Activated B cell treated with CpG ODN at 0.5 μM for 24 hours (primary cell): ENCODE measurements at regions of chr1 and their contacts with region 1.

Region 1: GRCh38 chr1:110384581-110385321 is 6.1 kb downstream of the SLC16A4 start:
- DNase-seq: peak; percentile 59
- ATAC-seq: peak; percentile 77
- H3K4me3 Mint-ChIP-seq: peak overlapping the region; percentile 55
- H3K27ac Mint-ChIP-seq: peak overlapping the region; percentile 95
- H3K4me1 Mint-ChIP-seq: peaks cover 95% of the 10 kb centered on the region
- H3K27me3 Mint-ChIP-seq: no peaks in the 10 kb centered on the region
- CTCF ChIP-seq: no peak

Region 2: GRCh38 chr1:108512239-108512981 is 1872.3 kb before region 1 on chr1:
- CTCF ChIA-PET with region 1: no interaction called
- POLR2A ChIA-PET with region 1: no interaction called
- intact Hi-C with region 1: no loop called
- DNase-seq: no peak
- ATAC-seq: peak; percentile 85
- H3K4me3 Mint-ChIP-seq: no peak overlapping the region
- H3K27ac Mint-ChIP-seq: no peak overlapping the region
- H3K4me1 Mint-ChIP-seq: no peaks in the 10 kb centered on the region
- H3K27me3 Mint-ChIP-seq: no peaks in the 10 kb centered on the region
- CTCF ChIP-seq: peak; percentile 95

Region 3: GRCh38 chr1:109090196-109091077 is 1294.3 kb before region 1 on chr1 and contains the start of gene TMEM167B:
- CTCF ChIA-PET with region 1: no interaction called
- POLR2A ChIA-PET with region 1: no interaction called
- intact Hi-C with region 1: loop called (anchors 5 kb)
- DNase-seq: peak; percentile 79
- ATAC-seq: peak; percentile 87
- H3K4me3 Mint-ChIP-seq: peak within 1 kb of the TSS; percentile 98
- H3K27ac Mint-ChIP-seq: peak within 1 kb of the TSS; percentile 97
- H3K4me1 Mint-ChIP-seq: peaks cover 35% of the 10 kb centered on the region
- H3K27me3 Mint-ChIP-seq: no peaks in the 10 kb centered on the region
- CTCF ChIP-seq: no peak
- total RNA-seq, gene TMEM167B: 45.0 and 48.2 TPM in 2 replicates

Region 4: GRCh38 chr1:109931189-109931731 is 453.5 kb before region 1 on chr1:
- CTCF ChIA-PET with region 1: no interaction called
- POLR2A ChIA-PET with region 1: no interaction called
- intact Hi-C with region 1: no loop called
- DNase-seq: no peak
- ATAC-seq: no peak
- H3K4me3 Mint-ChIP-seq: no peak overlapping the region
- H3K27ac Mint-ChIP-seq: no peak overlapping the region
- H3K4me1 Mint-ChIP-seq: no peaks in the 10 kb centered on the region
- H3K27me3 Mint-ChIP-seq: peaks cover 8% of the 10 kb centered on the region
- CTCF ChIP-seq: no peak

Region 5: DNA sequence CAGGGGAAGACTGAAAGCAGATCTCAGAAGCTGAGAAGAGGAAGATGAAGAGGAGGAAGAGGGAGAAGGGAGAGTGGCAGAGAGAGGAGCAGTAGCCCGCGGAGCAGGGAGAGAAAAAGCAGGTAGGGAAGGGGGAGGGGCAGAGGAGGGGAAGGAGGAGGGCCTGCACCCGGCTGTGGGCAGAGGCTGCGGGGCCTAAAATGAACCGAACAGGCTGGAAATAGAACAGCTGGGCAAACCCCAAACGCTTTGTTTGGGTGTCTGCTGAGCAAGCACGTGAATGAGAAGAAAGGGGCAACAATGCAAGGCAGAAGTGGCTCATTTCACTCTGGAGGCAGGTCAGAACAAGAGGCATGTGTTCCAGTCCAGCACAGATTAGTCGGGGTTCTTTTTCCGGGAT is 141.2 kb before region 1 on chr1:
- CTCF ChIA-PET with region 1: no interaction called
- POLR2A ChIA-PET with region 1: no interaction called
- intact Hi-C with region 1: loop called (anchors 1 kb)
- DNase-seq: peak; percentile 30
- ATAC-seq: peak; percentile 89
- H3K4me3 Mint-ChIP-seq: peak overlapping the region; percentile 71
- H3K27ac Mint-ChIP-seq: peak overlapping the region; percentile 73
- H3K4me1 Mint-ChIP-seq: peaks cover 37% of the 10 kb centered on the region
- H3K27me3 Mint-ChIP-seq: no peaks in the 10 kb centered on the region
- CTCF ChIP-seq: no peak

Region 6: GRCh38 chr1:110407260-110408210 is 22.8 kb after region 1 on chr1 and contains the start of gene LAMTOR5:
- CTCF ChIA-PET with region 1: interaction called, 12 read pairs
- POLR2A ChIA-PET with region 1: interaction called, 47 read pairs
- intact Hi-C with region 1: loop called (anchors 1 kb)
- DNase-seq: peak; percentile 84
- ATAC-seq: peak; percentile 91
- H3K4me3 Mint-ChIP-seq: peak within 1 kb of the TSS; percentile 97
- H3K27ac Mint-ChIP-seq: peak within 1 kb of the TSS; percentile 96
- H3K4me1 Mint-ChIP-seq: peaks cover 26% of the 10 kb centered on the region
- H3K27me3 Mint-ChIP-seq: no peaks in the 10 kb centered on the region
- CTCF ChIP-seq: no peak
- total RNA-seq, gene LAMTOR5: 160 and 172 TPM in 2 replicates

Region 7: GRCh38 chr1:110412576-110412975 is 27.8 kb after region 1 on chr1:
- CTCF ChIA-PET with region 1: interaction called, 12 read pairs
- POLR2A ChIA-PET with region 1: interaction called, 47 read pairs
- intact Hi-C with region 1: loop called (anchors 1 kb)
- DNase-seq: peak; percentile 56
- ATAC-seq: peak; percentile 66
- H3K4me3 Mint-ChIP-seq: peak overlapping the region; percentile 66
- H3K27ac Mint-ChIP-seq: peak overlapping the region; percentile 67
- H3K4me1 Mint-ChIP-seq: peaks cover 23% of the 10 kb centered on the region
- H3K27me3 Mint-ChIP-seq: no peaks in the 10 kb centered on the region
- CTCF ChIP-seq: no peak